GM13977 (cell line): ENCODE measurements at regions of chr6 and their contacts with region 1.

Region 1: DNA sequence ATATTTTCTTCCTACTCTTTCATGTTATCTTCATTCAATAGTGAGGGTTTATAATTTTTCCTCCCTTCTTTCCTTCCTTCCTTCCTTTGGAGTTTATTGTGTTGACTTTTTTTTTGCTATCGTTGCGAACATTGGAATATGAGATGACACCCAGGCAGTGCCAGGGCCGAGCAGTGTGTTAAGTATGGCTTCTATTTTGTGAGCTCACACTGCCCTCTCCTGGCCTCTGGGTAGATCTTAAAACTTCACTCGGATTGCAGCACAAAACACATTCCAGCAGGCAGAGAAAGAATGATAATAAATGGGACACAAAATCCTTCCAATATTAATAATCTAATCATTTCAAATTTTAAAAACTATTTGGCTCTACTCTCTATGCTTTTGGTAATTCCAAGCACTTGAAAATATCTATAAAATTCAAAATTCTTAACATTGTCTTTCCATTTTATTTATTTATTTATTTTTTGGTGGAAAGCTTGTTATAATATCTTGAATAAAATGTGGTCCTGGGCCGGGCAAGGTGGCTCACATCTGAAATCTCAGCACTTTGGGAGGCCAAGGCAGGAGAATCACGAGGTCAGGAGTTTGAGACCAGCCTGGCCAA is 147.4 kb upstream of the OLIG3 start:
- DNase-seq: peak; percentile 43
- CTCF ChIP-seq: peak; percentile 75

Region 2: GRCh38 chr6:136967876-136968752 is 673.5 kb before region 1 on chr6:
- in situ Hi-C with region 1: loop called (anchors 25 kb)
- DNase-seq: peak; percentile 82
- CTCF ChIP-seq: peak; percentile 81

Region 3: GRCh38 chr6:137076277-137077068 is 565.1 kb before region 1 on chr6:
- in situ Hi-C with region 1: loop called (anchors 25 kb)
- DNase-seq: peak; percentile 62
- CTCF ChIP-seq: peak; percentile 89

Region 4: DNA sequence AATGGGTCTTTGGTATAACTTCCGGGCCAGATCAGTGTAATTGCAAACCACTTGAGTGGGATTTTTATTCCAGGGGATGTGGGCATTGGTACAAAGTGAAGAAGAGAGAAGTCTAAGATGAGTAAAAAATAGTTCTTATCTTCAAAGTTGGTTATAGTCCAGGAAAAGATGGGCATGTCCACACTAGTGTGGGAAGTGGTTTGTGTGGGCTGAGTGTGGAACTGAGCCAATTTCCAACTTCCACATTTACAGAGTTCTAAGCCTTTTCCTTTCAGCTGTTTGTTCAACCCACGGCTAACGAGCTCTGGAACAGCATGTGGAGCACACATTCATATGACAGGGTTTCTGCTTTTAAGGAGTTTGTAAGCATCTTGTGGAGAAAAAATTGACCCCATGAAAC is 350.1 kb before region 1 on chr6:
- in situ Hi-C with region 1: no loop called
- DNase-seq: no peak
- CTCF ChIP-seq: no peak

Region 5: GRCh38 chr6:137313928-137314855 is 327.4 kb before region 1 on chr6:
- in situ Hi-C with region 1: loop called (anchors 25 kb)
- DNase-seq: peak; percentile 52
- CTCF ChIP-seq: peak; percentile 86

Region 6: GRCh38 chr6:137332637-137333280 is 308.8 kb before region 1 on chr6:
- in situ Hi-C with region 1: no loop called
- DNase-seq: no peak
- CTCF ChIP-seq: no peak

Region 7: DNA sequence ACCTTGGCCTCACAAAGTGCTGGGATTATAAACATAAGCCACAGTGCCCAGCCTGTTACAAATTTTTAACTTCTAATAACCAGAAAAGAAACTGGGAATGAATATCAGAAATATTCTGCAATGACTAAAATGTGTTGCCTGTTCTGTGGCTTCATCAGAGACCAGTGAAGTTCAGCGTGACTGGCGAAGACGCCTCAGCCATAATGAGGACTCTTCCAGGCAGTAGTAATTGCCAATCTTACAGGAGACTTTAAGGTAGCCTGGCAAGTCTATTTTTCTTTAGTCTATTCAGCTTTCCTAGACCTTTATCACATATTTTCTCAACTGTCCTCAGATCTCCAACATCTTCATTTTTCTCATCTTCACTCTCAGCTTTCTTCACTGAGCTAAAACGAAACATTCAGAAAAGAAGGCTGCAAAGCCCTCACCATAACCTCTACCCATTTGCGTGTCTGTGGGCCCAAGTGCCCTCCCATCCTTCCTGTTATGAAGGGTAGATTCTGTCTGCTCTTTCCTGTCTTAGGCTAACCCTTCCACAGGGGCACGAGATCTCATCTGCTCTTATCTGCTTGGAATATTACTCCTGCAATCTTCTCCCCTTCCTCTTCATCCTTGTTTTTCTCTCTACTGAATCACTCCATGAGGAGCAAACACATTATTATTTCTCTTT is 105.3 kb before region 1 on chr6:
- in situ Hi-C with region 1: no loop called
- DNase-seq: no peak
- CTCF ChIP-seq: no peak